ENCODE measurements at regions of chr12 and their contacts with region 1.

Region 1: GRCh38 chr12:56078990-56079664 is 838 bp upstream of the ERBB3 start:
- DNase-seq: peak; percentile 91 to 97 (median 94)
- ATAC-seq: peak; percentile 67 to 77 (median 72)
- H3K4me3 ChIP-seq: peak overlapping the region; percentile 43 to 91 (median 76)
- H3K27ac ChIP-seq: peak overlapping the region; percentile 94 to 97 (median 96)
- H3K4me1 ChIP-seq: peaks cover 0 to 15% (median 14%) of the 10 kb centered on the region in 3 donors
- H3K27me3 ChIP-seq: no peaks in the 10 kb centered on the region
- CTCF ChIP-seq: peak; percentile 57 to 73 (median 68)

Region 2: DNA sequence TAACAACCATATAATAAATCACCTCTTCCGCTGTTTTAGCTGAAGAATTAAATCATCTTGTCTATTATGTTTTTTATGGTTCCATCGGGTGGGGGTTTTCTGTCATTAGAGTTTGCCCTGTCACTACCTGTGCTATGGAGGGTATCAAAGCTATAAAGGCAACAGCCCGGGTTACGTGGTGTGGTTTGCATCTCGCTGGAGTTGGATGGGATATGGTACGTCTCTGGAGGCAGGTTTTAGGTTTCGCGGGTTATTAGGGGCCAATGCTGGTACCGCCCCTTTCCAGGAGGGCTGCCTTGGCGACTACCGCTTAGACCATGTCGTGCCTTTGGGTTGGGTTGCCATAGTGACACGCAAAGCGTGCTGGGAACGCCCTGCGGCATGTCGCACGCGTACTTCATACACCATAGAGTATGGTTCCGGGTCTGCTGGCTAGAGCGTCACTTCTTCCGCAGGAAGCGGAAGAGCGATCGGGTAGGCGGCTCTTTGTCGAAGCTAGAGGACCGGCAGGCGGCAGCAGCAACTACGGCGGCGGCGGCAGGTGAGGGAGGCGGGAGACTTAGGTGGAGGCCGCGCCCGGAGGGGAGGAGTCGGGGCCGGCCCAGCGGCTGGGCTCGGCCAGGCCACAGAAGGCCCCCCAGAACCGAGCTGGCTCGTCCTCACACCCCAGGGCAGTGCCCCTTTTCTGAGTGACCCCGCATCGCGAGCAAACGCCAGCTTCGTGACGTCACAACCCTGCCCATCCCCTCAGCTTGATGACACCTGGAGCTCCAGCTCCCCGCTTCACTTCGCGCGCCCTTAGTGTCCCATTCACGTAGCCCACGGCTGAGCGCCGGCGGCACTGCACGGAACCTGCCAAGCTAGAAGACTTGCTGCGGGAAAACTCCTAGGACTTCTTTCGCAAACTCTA is 38.9 kb after region 1 on chr12 and contains the start of gene ZC3H10:
- intact Hi-C with region 1: loop called in 1 of 3 experiments (anchors 5 kb)
- DNase-seq: peak; percentile 89 to 99 (median 98)
- ATAC-seq: peak; percentile 78 to 88 (median 82)
- H3K4me3 ChIP-seq: peak within 1 kb of the TSS; percentile 45 to 84 (median 66)
- H3K27ac ChIP-seq: peak within 1 kb of the TSS; percentile 80 to 94 (median 87)
- H3K4me1 ChIP-seq: peaks cover 0 to 17% (median 13%) of the 10 kb centered on the region in 3 donors
- H3K27me3 ChIP-seq: no peaks in the 10 kb centered on the region
- CTCF ChIP-seq: peak in 2 of 4 donors; percentile 22 to 30
- total RNA-seq, gene ZC3H10: 2.6 to 4.1 (median 3.2) TPM